Head of caudate nucleus (tissue), 42 donors: ENCODE measurements at regions of chr1 and their contacts with region 1.

Region 1: DNA sequence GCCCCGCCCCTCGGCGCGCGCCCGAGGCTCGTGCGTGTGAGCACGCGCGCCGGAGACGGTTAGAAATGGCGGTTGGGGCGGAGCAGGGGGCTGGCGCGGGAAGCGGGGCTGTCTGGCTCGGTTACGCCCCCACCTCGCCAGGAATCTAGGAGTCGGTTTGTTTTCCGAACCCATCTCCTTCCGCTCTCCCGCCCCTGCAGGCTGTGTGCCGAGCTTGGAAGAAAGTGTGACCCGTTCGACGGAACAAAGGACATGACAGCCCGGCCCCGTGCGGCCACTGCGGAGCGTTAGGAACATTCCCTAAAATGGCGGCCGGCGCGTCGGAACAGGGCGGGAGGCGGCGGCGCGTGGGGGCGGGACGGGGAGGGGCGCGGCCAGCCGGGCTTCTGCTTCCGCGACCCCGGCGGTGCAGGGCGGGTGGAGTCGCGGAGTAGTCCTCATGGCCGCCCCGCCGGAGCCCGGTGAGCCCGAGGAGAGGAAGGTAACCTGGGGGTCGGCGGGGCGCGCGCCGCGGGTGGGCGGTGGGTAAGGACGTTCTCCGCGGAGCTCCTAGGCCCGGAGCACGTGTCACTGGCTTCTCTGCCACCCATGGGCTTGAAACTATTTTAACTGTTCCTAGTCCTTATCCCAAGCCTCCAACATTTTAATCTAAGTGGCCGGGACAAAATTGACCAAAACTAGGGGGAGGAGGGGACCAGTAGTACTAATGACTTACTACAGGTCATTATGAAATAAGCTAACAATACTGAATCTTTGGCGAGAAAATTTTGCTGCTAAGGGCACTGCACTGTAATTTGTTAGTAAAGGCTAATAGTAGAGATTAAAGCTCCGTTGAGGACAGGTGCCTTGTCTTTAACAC is at the start of gene COX20:
- DNase-seq: peak in 41 of 42 donors; percentile 68 to 95 (median 89)

Region 2: DNA sequence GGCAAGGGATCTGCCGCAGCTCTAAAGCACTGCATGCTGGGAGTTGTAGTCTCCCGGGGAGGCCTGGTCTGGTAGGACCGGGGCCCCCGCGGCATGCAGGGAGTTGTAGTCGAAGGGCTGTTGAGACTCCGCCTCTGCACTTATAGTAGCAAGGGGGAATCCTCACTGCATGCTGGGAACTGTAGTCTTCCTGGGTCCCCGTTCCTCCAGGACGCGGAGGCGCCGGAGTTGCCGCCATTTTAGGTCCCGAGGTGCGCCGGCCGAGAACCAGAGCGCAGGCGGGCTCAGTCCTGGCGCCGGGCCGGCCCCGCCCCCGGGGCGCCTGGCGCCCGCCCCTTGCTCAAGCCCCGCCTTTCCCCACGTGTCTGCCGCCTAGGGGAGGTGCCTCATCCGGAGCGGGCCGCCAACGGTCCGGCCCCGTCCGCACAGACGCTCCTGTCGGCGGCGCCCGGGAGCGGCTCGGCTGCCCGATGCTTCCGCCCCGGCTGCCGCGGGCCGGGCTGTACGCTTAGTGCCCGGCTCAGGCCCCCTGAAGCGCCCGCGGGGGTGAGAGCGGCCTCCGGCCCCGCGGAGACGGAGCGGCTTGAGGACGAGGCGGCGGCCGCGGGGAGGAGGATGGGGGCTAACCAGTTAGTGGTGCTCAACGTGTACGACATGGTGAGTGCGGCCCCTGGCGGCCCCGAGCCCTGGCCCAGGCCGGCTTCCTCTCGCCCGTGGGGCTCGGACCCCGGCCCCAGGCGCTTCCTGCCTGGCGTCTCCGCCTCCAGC is 182.6 kb before region 1 on chr1 and contains the start of gene DESI2:
- intact Hi-C with region 1: loop called (anchors 2 kb)
- DNase-seq: peak; percentile 94 to 100 (median 99)

Region 3: DNA sequence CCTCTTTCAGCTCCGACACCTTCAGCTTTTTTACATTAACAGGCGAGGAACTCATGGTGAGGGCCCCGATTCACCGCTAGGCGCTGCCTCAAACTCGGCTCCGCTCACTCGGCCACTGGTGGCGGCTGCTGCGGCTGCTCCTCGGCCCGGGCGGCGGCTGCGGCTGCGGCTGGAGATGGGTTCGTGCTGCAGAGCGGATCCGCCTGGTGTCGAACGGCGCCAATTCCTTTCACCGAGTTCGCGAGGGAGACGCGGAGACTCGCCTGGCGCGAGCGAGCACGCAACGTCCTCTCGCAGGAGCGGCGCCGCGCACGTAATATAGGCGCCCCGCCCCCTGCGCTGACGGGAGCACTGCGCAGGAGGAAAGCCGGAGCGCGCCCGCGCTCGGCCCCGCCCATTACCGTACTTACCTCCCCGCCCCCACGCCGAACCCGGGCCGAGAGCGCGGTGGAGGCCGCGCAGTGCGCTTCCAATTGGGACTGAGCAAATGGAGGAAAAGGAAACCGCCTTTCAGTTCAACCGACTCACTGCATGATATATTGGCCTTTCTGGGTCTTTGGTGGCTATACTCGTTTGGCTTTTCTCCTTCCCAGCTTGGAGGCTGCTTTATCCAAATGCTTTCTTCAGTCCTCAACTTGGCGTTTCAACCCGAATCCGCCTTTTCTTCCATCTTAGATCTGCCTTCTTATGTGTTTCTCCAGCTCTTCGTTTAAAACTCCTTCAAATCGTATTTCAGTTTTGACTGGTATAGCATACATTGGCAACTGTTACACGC is 28.9 kb after region 1 on chr1 and contains the start of gene HNRNPU:
- intact Hi-C with region 1: loop called (anchors 1 kb)
- DNase-seq: peak; percentile 89 to 99 (median 97)

Region 4: DNA sequence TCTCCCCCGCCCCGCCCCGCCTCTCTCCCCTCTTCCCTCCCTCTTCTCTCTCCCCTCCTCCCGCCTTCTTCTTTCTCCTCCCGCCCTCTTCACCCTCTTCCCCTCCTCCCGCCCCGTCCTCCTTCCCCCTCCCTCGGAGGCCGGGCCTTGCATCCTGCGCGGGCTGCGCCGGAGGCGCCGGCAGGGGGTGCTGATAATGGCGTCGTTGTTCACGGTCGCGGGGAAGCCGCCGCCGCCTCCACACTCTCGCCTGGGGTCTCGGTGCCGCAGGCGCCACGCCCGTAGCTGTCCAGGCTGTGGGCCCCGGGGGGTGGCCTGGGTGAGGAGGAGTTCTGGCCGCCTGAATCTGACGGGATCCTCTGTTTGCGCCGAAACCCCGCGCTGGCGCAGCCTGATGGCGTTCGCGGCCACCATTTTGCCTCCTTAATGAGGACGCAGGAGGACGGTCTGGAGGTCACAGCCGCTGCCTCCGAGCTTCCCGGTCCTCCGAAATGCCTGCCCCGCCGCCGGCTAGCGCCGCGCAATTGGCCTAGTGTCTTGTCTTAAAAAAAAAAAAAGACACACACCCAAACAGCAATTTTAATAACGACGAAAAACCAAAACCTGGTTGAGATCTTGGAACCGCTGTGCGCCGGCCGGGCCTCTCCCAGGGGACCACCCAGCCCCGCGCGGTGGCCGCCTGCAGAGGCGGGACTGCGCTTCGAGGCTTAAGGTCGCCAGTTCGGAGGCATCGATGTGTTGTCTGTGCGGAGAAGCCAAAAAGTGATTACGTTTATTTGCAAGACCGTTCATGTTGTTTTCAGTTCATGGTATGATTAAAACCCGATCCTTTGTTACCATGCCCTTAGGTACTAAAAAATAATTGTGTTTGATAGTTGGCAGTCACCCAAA is 135.4 kb after region 1 on chr1:
- intact Hi-C with region 1: loop called (anchors 1 kb)
- DNase-seq: peak; percentile 86 to 98 (median 96)

Region 5: DNA sequence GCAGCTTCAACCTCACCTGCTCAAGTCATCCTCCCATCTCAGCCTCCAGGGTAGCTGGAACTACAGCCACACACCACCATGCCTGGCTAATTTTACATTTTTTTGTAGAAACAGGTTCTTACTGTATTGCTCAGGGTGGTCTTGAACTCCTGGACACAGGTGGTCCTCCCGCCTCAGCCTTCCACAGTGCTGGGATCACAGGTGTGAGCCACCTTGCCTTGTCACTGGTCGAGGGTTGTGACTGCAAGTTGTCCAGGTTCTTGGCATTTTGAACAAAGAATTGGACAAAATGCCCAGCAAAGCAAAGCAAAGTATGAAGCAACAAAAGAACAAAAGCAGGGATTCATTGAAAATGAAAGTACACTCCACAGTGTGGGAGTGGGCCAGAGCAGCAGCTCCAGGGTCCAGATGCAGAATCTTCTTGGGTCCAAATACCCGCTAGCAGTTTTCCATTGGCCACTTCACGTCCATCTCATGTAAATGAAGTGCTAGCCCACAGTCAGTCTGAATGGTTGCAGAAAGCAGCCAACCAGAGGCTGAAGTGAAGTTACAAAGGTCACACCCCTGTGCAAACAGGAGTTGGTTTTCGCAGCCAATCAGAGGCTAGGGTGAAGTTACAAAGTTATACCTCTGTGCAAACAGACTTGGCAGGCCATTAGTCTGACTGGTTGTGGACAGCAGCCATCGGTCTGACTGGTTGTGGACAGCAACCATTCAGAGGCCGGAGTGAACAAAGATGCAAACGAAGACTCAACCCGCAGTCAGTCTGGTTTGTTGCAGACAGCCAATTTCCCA is 209.8 kb after region 1 on chr1:
- intact Hi-C with region 1: loop called (anchors 10 kb)
- DNase-seq: peak in 16 of 42 donors; percentile 17 to 69 (median 35)